ENCODE measurements at regions of chr3 and their contacts with region 1.

Region 1: GRCh38 chr3:11379233-11379823 is 107.1 kb downstream of the ATG7 start:
- DNase-seq: peak; percentile 56
- H3K4me3 ChIP-seq: no peak overlapping the region
- H3K27ac ChIP-seq: no peak overlapping the region
- H3K4me1 ChIP-seq: peaks cover 6 to 12% of the 10 kb centered on the region in 2 experiments; a peak in 3 of 4 replicates
- H3K27me3 ChIP-seq: no peaks in the 10 kb centered on the region
- CTCF ChIP-seq: peak; percentile 77
- EP300 ChIP-seq: no peak
- RAD21 ChIP-seq: peak; percentile 95

Region 2: DNA sequence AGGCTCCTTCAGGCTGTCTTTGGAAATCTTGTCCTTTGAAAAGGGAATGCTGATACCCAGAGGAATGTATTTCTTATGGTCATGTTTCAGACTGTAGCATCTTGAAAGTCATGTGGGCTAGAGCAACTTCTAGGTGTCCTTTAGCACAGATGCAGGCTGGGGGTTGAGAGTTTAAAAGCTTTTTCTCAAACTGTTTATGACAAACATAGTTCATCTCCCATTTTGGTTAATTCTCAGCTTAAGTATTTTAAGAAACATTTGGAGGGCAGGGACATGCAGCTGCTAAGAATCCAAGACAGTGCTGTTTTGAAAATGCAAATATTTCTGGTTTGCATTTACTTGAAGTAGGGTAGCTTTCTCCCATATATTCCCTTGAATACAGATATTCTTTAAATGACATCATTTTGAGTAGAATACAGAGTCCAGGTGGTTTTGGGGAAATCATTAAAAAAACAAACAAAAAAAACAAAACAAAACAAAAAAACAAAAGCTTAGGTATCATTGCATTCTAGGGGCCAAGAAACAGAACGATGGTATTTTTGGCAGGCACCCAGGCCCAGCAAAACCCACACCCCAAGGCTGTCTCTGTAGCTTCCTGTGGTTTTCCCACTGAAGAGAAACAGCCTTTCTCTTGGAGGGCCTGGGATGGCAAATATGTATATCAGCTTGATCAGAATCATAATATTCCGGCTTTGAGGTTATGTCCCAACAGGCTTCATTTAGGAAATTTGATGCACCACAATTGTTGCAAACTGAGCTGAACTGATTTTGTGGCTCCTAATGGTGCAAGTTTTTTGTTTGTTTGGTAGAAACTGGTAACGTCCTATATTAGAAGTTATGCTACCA is 12.9 kb after region 1 on chr3:
- CTCF ChIA-PET with region 1: interaction called, 51 read pairs
- POLR2A ChIA-PET with region 1: interaction called, 5 read pairs
- DNase-seq: peak; percentile 70
- H3K4me3 ChIP-seq: no peak overlapping the region
- H3K27ac ChIP-seq: peak overlapping the region; percentile 74 to 94
- H3K4me1 ChIP-seq: peaks cover 8 to 27% of the 10 kb centered on the region in 2 experiments; a peak in 3 of 4 replicates
- H3K27me3 ChIP-seq: no peaks in the 10 kb centered on the region
- CTCF ChIP-seq: no peak
- EP300 ChIP-seq: peak; percentile 79 to 91
- RAD21 ChIP-seq: no peak

Region 3: DNA sequence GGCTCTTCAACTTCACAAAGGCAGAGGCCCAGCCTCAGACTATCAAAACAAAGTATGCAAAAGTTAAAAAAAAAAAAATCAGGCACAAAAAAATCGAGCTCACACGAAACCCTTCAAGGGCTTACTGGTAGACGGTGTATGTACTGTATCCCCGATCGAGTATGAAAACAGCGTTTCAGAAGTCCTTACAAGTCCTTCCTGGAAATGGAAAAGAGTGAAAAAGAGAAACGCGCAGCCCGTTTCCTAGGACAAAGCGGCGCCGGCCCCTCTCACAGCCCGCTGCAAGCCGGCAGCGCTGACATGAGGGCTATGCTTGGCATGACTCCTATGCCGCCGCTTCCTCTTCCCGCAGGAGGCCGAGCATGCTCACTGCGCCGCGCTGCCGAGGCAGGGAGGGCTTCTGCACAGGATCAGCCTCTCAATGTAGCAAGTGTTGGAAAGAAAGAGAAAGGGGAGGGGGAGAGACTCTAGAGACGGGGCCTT is 264.3 kb after region 1 on chr3 and contains the start of gene VGLL4:
- CTCF ChIA-PET with region 1: interaction called, 147 read pairs
- POLR2A ChIA-PET with region 1: no interaction called
- DNase-seq: peak; percentile 88
- H3K4me3 ChIP-seq: peak within 1 kb of the TSS; percentile 70 to 71
- H3K27ac ChIP-seq: peak within 1 kb of the TSS; percentile 98
- H3K4me1 ChIP-seq: peaks cover 21 to 25% of the 10 kb centered on the region in 2 experiments
- H3K27me3 ChIP-seq: no peaks in the 10 kb centered on the region
- CTCF ChIP-seq: no peak
- EP300 ChIP-seq: no peak
- RAD21 ChIP-seq: peak; percentile 52
- polyA plus RNA-seq, gene VGLL4: 48.9 and 52.1 TPM in 2 replicates

Region 4: GRCh38 chr3:11803977-11804892 is 424.9 kb after region 1 on chr3:
- CTCF ChIA-PET with region 1: interaction called, 23 read pairs
- POLR2A ChIA-PET with region 1: no interaction called
- DNase-seq: peak; percentile 57
- H3K4me3 ChIP-seq: no peak overlapping the region
- H3K27ac ChIP-seq: no peak overlapping the region
- H3K4me1 ChIP-seq: no peaks in the 10 kb centered on the region
- H3K27me3 ChIP-seq: no peaks in the 10 kb centered on the region
- CTCF ChIP-seq: peak; percentile 69
- EP300 ChIP-seq: no peak
- RAD21 ChIP-seq: peak; percentile 70

Region 5: DNA sequence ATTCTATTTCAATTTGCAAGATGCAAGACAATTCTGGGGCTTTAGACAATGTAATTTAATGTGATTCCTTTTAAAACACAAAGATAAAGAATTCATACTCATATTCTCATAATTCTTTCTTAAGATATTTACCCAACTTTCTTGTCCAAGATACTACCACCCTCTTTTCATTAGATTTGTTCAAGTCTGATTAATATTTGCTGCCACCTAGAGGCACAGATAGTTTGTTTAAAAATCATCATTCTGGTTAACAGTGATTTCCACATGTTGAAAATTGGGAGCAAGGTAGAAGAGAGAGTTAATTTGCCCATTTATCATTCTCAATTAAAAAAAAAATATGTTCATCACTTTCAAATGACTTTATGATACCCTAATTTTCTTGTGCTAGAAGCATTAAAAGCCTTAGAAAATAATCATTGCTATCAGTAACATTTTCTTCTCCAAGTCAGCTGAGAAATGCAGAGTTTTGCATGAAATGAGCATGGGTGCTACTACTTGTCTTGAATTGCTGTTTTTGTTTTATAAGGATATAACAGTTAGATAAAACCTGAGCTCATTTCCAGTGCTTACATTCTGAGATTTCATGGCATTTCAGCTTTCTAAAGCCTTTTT is 455.8 kb after region 1 on chr3:
- CTCF ChIA-PET with region 1: interaction called, 19 read pairs
- POLR2A ChIA-PET with region 1: no interaction called
- DNase-seq: peak; percentile 44
- H3K4me3 ChIP-seq: no peak overlapping the region
- H3K27ac ChIP-seq: no peak overlapping the region
- H3K4me1 ChIP-seq: no peaks in the 10 kb centered on the region
- H3K27me3 ChIP-seq: no peaks in the 10 kb centered on the region
- CTCF ChIP-seq: peak; percentile 71
- EP300 ChIP-seq: no peak
- RAD21 ChIP-seq: peak; percentile 70

Measured in SK-N-SH (cell line).